Activated CD8-positive, alpha-beta T cell treated with anti-CD3 and anti-CD28 coated beads for 36 hours (primary cell): ENCODE measurements at regions of chr12 and their contacts with region 1.

Region 1: GRCh38 chr12:76441016-76441415 is 92.8 kb upstream of the BBS10 start:
- DNase-seq: no peak
- ATAC-seq: no peak
- H3K4me3 Mint-ChIP-seq: no peak overlapping the region
- H3K27ac Mint-ChIP-seq: no peak overlapping the region
- H3K4me1 Mint-ChIP-seq: peaks cover 27% of the 10 kb centered on the region
- H3K27me3 Mint-ChIP-seq: no peaks in the 10 kb centered on the region
- CTCF ChIP-seq: no peak

Region 2: GRCh38 chr12:76123451-76124212 is 317.4 kb before region 1 on chr12:
- CTCF ChIA-PET with region 1: no interaction called
- POLR2A ChIA-PET with region 1: no interaction called
- intact Hi-C with region 1: no loop called
- DNase-seq: no peak
- ATAC-seq: no peak
- H3K4me3 Mint-ChIP-seq: no peak overlapping the region
- H3K27ac Mint-ChIP-seq: no peak overlapping the region
- H3K4me1 Mint-ChIP-seq: no peaks in the 10 kb centered on the region
- H3K27me3 Mint-ChIP-seq: peaks cover 1% of the 10 kb centered on the region
- CTCF ChIP-seq: no peak

Region 3: DNA sequence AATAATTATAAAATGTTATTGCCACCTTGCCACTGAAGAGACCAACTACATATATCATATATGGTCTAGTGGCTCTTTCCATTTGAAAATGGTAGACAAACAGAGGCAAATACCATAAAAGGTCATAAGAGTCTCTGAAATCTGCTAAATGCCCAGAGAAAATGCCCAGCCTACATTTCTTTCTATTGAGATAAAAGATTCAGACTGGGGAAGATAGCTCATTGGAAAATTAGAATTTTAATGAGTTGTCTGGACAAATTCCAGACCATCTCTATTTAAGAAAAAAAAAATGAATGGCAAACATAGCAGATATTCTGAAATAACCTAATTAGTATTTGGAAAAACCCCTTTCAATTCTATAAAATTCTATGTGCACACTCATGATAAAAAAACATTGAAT is 12.9 kb before region 1 on chr12:
- CTCF ChIA-PET with region 1: interaction called, 10 read pairs
- POLR2A ChIA-PET with region 1: no interaction called
- intact Hi-C with region 1: no loop called
- DNase-seq: no peak
- ATAC-seq: no peak
- H3K4me3 Mint-ChIP-seq: no peak overlapping the region
- H3K27ac Mint-ChIP-seq: no peak overlapping the region
- H3K4me1 Mint-ChIP-seq: peaks cover 28% of the 10 kb centered on the region
- H3K27me3 Mint-ChIP-seq: no peaks in the 10 kb centered on the region
- CTCF ChIP-seq: no peak

Region 4: DNA sequence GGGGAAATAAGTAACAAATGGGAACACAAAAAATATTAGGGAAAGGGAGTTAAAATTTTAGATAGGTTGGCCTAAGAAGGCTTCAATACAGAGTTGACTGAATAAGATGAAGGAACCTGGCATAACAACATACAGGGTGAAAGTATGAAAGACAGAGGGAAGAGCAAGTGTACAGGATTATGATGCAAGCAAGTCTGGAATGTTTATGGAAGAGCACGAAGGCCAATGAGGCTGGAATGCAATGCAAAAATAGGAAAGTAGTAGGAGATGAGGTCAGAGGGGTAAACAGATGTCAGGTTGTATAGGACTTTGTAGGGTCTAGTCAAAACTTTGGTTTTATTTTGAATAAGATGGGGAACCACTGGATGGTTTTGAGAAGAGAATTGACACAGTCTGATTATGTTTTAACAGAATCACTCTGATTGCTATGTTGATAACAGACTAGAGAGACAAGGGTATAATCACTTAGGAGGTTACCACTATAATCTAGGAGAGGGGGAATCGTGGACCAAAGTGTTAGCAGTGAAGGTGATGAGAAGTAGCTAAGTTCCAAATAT is 21.7 kb after region 1 on chr12:
- CTCF ChIA-PET with region 1: no interaction called
- POLR2A ChIA-PET with region 1: no interaction called
- intact Hi-C with region 1: no loop called
- DNase-seq: no peak
- ATAC-seq: no peak
- H3K4me3 Mint-ChIP-seq: no peak overlapping the region
- H3K27ac Mint-ChIP-seq: no peak overlapping the region
- H3K4me1 Mint-ChIP-seq: peaks cover 38% of the 10 kb centered on the region
- H3K27me3 Mint-ChIP-seq: no peaks in the 10 kb centered on the region
- CTCF ChIP-seq: no peak

Region 5: GRCh38 chr12:76529226-76529918 is 88.4 kb after region 1 on chr12:
- CTCF ChIA-PET with region 1: no interaction called
- POLR2A ChIA-PET with region 1: no interaction called
- intact Hi-C with region 1: no loop called
- DNase-seq: no peak
- ATAC-seq: no peak
- H3K4me3 Mint-ChIP-seq: no peak overlapping the region
- H3K27ac Mint-ChIP-seq: no peak overlapping the region
- H3K4me1 Mint-ChIP-seq: peaks cover 40% of the 10 kb centered on the region
- H3K27me3 Mint-ChIP-seq: no peaks in the 10 kb centered on the region
- CTCF ChIP-seq: no peak

Region 6: DNA sequence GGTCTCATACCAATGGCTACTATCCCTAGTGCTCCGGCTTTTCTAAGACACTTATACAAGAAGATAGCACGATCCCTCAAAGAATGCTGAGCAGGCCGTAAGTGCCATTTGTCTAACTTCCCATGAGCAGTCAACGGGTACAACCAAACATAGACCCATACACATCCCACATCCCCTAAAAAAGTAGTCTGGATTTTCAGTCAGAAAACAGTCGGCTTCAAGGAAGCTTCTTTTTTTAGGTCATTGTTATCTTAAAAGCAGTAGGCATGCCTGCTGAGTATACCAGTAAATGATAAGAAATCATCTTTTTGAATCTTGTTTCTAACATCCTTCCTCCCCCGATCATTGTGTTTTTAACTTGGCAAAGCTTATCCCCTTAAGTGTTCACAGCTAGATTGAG is 98.7 kb after region 1 on chr12:
- CTCF ChIA-PET with region 1: no interaction called
- POLR2A ChIA-PET with region 1: no interaction called
- intact Hi-C with region 1: no loop called
- DNase-seq: no peak
- ATAC-seq: no peak
- H3K4me3 Mint-ChIP-seq: no peak overlapping the region
- H3K27ac Mint-ChIP-seq: peak overlapping the region; percentile 1
- H3K4me1 Mint-ChIP-seq: peaks cover 43% of the 10 kb centered on the region
- H3K27me3 Mint-ChIP-seq: no peaks in the 10 kb centered on the region
- CTCF ChIP-seq: no peak